ENCODE measurements at regions of chr20 and their contacts with region 1.

Region 1: GRCh38 chr20:50987592-50988210 is 29.1 kb downstream of the MOCS3 start:
- DNase-seq: peak; percentile 90
- H3K4me3 Mint-ChIP-seq: no peak overlapping the region
- H3K27ac Mint-ChIP-seq: no peak overlapping the region
- H3K4me1 Mint-ChIP-seq: peaks cover 12% of the 10 kb centered on the region
- H3K27me3 Mint-ChIP-seq: no peaks in the 10 kb centered on the region
- CTCF ChIP-seq: peak; percentile 94

Region 2: DNA sequence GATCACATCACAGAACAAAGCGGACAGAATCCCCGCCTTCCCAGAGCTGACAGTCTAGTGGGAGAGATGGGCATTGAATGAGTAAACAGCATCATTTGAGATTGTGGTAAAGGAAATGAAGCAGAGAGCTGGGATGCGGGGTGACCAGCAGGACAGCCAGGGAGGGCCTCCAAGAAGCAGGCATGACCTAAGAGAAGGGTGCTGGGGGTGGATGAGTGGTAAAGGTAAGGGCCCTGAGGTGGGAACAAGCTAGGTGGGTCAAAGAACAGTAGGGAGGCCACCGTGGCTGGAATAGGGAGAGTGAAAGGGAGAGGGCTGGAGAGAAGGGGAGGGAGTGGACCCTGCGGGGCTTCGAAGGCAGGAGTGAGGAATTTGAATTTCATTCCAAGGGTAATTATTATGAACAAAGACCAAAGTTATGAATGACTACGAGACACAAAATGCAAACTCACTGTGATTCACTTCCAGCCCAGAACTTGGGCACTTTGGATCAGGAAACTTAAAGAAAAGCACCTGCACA is 735.6 kb before region 1 on chr20:
- CTCF ChIA-PET with region 1: no interaction called
- POLR2A ChIA-PET with region 1: no interaction called
- intact Hi-C with region 1: no loop called
- DNase-seq: no peak
- H3K4me3 Mint-ChIP-seq: no peak overlapping the region
- H3K27ac Mint-ChIP-seq: no peak overlapping the region
- H3K4me1 Mint-ChIP-seq: peaks cover 27% of the 10 kb centered on the region
- H3K27me3 Mint-ChIP-seq: no peaks in the 10 kb centered on the region
- CTCF ChIP-seq: no peak

Region 3: DNA sequence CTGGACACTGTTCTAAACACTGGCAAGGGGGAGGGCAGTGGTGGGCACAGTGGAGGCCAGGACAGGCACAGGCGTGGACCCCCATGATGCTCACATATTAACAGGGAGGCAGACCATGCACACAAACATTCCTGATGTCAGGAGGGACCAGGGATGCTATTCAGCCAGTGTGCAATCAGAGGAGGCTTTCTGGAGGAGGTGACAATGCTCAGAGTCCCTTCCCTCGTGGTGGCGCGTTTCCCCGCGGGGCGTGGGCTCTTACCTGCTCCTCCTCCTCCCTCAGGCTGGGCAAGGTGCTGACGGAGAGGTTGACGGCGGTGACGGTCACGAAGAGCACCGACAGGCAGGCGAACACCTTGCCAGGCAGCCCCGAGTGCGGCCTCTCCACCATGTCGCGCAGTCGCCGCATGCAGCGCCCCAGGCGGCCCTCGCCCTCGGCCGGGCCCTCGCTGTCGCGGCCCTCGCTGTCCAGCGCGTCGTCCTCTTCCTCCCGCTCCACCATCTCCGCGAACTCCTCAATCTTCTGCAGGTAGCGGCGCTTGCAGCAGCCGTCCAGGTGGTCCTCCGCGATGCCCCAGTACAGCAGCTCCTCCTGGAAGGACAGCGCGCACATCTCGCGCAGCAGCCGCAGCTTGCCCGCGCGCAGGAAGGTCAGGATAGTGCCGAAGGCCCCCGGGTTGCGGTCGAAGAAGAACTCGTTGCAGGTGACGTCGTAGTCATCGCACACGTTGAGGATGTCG is 21.8 kb after region 1 on chr20:
- CTCF ChIA-PET with region 1: interaction called, 14 read pairs
- POLR2A ChIA-PET with region 1: no interaction called
- intact Hi-C with region 1: no loop called
- DNase-seq: no peak
- H3K4me3 Mint-ChIP-seq: no peak overlapping the region
- H3K27ac Mint-ChIP-seq: no peak overlapping the region
- H3K4me1 Mint-ChIP-seq: peaks cover under 1% of the 10 kb centered on the region
- H3K27me3 Mint-ChIP-seq: no peaks in the 10 kb centered on the region
- CTCF ChIP-seq: no peak

Region 4: DNA sequence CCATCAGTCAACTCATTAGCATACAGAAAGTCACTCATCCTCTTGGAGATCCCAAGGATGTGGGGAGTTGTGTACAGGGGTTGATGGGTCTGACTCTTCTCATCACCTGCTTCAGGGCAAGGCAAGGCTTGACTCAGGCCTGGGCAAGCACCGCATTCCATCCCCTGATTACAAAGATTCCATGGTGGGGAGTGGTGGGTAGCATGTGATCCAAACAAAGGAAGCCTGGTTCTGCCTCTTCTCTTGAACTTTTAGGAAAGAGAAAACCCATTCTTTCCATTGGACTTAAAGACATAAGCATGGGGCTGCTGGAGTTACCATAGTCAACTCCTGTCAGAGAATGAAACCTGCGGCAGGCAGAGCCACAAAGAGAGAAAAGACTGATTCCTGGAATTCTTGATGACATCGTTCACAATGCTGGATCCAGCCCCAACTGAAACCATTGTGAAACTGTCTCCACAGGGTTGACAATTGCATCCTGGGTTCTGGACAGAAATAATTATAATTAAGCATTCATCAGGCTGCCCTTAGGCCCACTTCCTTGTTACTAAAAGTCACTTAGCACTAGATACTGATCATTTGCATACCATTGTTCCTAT is 271.0 kb after region 1 on chr20:
- CTCF ChIA-PET with region 1: interaction called, 13 read pairs
- POLR2A ChIA-PET with region 1: no interaction called
- intact Hi-C with region 1: no loop called
- DNase-seq: peak; percentile 55
- H3K4me3 Mint-ChIP-seq: no peak overlapping the region
- H3K27ac Mint-ChIP-seq: peak overlapping the region; percentile 89
- H3K4me1 Mint-ChIP-seq: peaks cover 13% of the 10 kb centered on the region
- H3K27me3 Mint-ChIP-seq: no peaks in the 10 kb centered on the region
- CTCF ChIP-seq: no peak

Region 5: GRCh38 chr20:51366155-51366886 is 378.6 kb after region 1 on chr20:
- CTCF ChIA-PET with region 1: interaction called, 20 read pairs
- POLR2A ChIA-PET with region 1: no interaction called
- intact Hi-C with region 1: loop called (anchors 5 kb)
- DNase-seq: peak; percentile 87
- H3K4me3 Mint-ChIP-seq: peak overlapping the region; percentile 20
- H3K27ac Mint-ChIP-seq: peak overlapping the region; percentile 81
- H3K4me1 Mint-ChIP-seq: peaks cover 15% of the 10 kb centered on the region
- H3K27me3 Mint-ChIP-seq: no peaks in the 10 kb centered on the region
- CTCF ChIP-seq: no peak

Region 6: GRCh38 chr20:51608061-51608460 is 620.4 kb after region 1 on chr20:
- CTCF ChIA-PET with region 1: interaction called, 10 read pairs
- POLR2A ChIA-PET with region 1: no interaction called
- intact Hi-C with region 1: no loop called
- DNase-seq: no peak
- H3K4me3 Mint-ChIP-seq: no peak overlapping the region
- H3K27ac Mint-ChIP-seq: no peak overlapping the region
- H3K4me1 Mint-ChIP-seq: no peaks in the 10 kb centered on the region
- H3K27me3 Mint-ChIP-seq: no peaks in the 10 kb centered on the region
- CTCF ChIP-seq: no peak

Measured in MCF 10A (cell line).